GM10248 (cell line): ENCODE measurements at regions of chr6 and their contacts with region 1.

Region 1: GRCh38 chr6:111259089-111259831 is 172.0 kb downstream of the SLC16A10 start:
- DNase-seq: peak; percentile 99
- CTCF ChIP-seq: peak; percentile 97

Region 2: DNA sequence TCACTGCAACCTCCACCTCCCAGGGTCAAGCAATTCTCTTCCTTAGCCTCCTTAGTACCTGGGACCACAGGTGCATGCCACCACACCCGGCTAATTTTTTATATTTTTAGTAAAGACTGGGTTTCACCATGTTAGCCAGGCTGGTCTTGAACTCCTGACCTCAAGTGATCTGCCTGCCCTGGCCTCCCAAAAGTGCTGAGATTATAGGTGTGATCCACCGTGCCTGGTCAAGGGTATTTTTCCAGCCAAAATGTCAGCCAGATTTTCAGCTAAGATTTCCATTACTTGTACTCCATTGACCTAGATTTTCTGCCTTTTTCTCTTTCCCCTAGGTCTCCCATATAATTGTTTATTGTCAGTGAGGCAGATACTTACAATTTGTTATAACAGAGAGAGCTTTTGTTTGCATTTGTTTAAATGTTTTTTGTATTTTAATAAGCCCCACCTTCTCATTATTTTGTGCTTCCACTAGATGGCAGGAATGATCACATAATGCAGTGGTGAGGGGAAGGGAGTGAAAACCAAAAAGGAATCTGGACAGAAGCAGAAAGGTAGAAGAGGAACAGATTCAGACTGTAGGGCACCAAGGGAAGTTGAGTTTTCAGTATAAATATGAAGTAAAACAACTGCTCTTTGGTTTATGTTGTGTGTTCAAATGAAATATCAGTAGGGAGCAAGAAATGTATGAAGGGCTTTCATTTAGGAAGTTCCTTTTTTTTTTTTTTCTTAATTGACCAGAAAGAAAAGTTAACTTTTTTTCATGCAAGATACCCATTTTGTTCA is 247.7 kb before region 1 on chr6:
- CTCF ChIA-PET with region 1: interaction called, 17 read pairs
- POLR2A ChIA-PET with region 1: no interaction called
- DNase-seq: peak; percentile 58
- CTCF ChIP-seq: peak; percentile 58

Region 3: DNA sequence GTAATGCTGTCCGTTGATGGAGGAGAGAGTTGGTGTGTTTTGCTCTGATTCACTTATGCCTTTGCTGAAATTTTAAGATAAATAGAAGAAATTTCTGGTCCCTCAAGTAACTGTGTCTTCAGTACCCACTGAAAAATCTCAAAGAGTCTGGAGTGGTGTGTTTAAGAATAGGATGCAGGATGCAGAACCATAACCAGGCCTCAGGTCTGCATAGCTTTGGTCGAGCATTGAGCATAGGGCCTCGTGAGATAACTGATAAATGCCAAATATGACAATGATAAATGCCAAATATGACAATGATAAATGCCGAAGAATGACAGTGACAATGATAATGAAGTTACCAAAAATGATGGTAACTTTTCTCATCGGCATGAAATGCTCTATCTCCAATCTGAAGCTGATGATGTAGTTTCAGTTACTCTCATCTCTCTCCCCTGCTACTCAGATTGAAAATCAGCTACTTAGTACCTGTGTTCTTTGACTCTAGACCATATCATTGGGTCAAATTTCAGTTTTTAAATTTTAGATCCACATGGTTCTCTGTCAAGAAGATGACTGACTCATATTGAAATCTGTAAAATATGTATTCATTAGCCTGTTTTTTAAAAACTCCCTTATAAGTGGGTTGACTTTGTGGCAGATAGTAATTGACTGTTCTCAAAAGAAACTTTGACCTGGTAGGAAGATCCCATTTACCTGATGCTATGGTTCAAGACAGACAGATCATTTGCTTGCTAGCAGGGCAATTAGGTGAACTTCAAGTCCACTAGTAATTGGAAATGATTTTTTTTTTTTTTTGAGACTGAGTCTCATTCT is 75.3 kb before region 1 on chr6:
- CTCF ChIA-PET with region 1: no interaction called
- POLR2A ChIA-PET with region 1: no interaction called
- DNase-seq: no peak
- CTCF ChIP-seq: no peak

Region 4: GRCh38 chr6:111291336-111292259 is 32.3 kb after region 1 on chr6:
- CTCF ChIA-PET with region 1: interaction called, 10 read pairs
- POLR2A ChIA-PET with region 1: no interaction called
- DNase-seq: no peak
- CTCF ChIP-seq: no peak

Region 5: DNA sequence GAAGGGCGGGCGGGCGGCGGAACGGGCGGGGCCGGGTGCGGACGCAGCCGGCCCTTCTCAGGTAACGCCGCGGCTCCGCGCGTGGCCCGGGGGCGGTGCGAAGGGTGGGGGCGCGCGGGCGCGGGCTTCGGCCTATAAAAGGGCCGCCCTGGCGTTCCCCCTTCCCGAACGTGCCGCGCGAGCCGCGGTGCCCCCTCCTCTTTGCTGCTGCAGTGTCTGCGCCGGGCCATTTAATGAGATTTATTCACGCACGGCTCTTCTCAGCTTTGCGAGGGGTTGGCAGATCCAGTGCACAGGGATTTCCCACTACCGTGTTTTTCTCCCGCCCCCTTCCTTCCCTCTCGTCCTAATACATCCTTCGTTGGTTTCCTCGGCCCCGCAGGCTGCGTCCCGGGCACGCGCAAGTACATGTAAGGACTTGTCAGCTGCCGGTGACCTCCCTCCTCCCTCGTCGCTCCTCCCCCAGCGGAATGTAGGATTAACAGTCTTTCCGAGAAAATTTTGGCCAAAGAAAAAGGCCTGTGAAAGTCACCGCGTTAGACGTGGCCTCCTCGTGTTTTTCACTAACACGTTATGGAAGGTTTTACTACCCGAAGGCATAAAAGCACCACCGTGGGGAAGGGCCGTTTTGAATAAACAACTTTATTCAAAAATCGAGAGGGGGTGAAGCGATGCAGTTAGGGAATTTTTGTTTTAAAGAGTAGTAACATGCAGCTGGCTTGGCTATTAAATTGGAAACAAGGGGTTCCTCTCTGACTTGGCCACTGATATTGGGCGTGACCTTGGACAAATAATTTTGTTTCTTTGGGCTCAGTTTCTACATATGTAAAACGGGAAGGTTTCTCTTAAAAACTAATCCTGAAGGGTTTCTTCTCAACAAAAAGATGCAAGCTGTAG is 224.7 kb after region 1 on chr6:
- CTCF ChIA-PET with region 1: interaction called, 63 read pairs
- POLR2A ChIA-PET with region 1: interaction called, 11 read pairs
- DNase-seq: peak; percentile 87
- CTCF ChIP-seq: no peak

Region 6: DNA sequence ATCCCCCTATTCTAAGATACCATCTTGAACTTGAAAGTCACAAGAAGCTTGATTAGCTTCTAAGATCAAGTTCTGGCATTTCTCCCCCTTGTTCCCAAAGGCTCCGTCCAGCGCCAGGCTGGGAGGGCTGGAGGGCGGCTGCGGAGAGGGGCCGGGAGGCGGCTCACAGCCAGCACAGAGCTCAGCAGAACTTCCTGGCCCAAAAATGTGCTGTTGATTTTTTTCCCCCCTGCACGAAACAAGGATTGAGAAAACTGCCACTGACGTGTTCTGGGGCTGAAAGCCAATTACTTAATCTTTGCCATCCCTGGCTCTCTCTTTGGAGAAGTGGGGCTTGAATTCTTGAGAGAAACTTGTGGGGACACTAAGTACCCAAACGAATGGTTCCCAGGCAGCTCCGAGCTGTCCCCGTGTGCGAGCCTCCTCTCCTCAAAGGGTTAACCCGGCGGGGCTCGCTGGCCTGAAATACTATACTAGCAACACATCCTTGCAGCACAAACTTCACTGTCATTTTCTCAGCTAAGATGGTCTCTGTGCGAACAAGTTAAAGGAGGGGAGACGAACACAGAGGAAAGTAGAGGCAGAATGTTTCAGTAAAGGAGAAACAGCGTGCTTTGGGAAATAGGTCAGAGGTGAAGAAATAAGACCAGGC is 346.0 kb after region 1 on chr6:
- CTCF ChIA-PET with region 1: interaction called, 17 read pairs
- POLR2A ChIA-PET with region 1: interaction called, 3 read pairs
- DNase-seq: peak; percentile 48
- CTCF ChIP-seq: no peak

Region 7: DNA sequence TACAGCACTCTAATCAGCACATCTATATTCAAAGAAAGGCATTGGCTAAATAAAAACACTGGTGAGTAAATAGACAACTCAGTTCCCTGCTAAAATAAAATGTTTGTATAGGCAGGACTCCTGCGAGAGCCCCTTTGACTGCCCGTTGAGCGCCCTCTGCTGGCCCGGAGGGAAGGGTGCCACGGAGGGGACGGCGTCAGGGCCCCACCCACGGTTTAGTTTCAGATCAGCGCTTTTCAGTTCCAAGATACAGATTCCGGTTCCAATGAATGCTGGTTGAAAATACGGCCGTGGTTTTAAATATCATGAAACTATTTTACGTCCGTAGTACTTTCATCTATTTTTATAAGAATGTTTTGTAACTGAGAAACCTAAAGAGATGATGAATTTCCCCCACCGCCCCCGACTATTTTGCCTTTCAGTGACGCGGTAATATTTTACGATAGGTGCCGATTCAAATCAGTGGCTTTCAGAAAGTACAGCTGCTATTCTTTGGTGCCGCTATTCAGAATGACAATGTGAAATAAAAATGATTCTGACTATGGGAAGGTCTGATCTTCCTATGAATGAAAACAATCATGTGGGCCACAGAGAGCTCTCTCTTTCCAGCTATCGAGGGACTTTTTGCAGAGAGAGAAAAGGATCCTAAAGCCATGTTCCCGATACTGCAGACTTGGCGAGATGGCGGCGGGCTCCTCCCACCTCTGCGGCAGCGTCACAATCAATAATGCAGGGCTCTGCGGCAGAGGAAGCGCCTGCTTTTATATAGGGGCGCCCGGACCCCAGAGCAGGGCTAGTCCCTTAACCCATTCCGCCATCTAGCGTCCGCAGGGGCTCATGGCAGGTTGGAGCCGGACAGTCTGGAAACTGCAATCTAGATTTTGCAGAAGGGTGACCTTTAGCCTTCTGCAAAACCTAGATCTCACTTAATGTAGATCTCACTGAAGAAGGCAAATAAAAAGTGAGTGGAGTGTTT is 784.1 kb after region 1 on chr6:
- CTCF ChIA-PET with region 1: interaction called, 30 read pairs
- POLR2A ChIA-PET with region 1: no interaction called
- DNase-seq: peak; percentile 87
- CTCF ChIP-seq: peak; percentile 98